Activated B cell treated with CpG ODN at 0.5 μM for 24 hours (primary cell): ENCODE measurements at regions of chr4 and their contacts with region 1.

Region 1: GRCh38 chr4:77156533-77156911 is 485 bp upstream of the CCNG2 start:
- DNase-seq: no peak
- ATAC-seq: peak; percentile 84
- H3K4me3 Mint-ChIP-seq: peak overlapping the region; percentile 99
- H3K27ac Mint-ChIP-seq: peak overlapping the region; percentile 100
- H3K4me1 Mint-ChIP-seq: peaks cover 75% of the 10 kb centered on the region
- H3K27me3 Mint-ChIP-seq: no peaks in the 10 kb centered on the region
- CTCF ChIP-seq: no peak

Region 2: GRCh38 chr4:76949276-76950051 is 207.1 kb before region 1 on chr4 and contains the start of gene SEPTIN11:
- CTCF ChIA-PET with region 1: no interaction called
- POLR2A ChIA-PET with region 1: interaction called, 3 read pairs
- intact Hi-C with region 1: loop called (anchors 1 kb)
- DNase-seq: peak; percentile 77
- ATAC-seq: peak; percentile 76
- H3K4me3 Mint-ChIP-seq: peak within 1 kb of the TSS; percentile 90
- H3K27ac Mint-ChIP-seq: peak within 1 kb of the TSS; percentile 68
- H3K4me1 Mint-ChIP-seq: peaks cover 15% of the 10 kb centered on the region
- H3K27me3 Mint-ChIP-seq: no peaks in the 10 kb centered on the region
- CTCF ChIP-seq: no peak
- total RNA-seq, gene SEPTIN11: 22.3 and 22.4 TPM in 2 replicates

Region 3: DNA sequence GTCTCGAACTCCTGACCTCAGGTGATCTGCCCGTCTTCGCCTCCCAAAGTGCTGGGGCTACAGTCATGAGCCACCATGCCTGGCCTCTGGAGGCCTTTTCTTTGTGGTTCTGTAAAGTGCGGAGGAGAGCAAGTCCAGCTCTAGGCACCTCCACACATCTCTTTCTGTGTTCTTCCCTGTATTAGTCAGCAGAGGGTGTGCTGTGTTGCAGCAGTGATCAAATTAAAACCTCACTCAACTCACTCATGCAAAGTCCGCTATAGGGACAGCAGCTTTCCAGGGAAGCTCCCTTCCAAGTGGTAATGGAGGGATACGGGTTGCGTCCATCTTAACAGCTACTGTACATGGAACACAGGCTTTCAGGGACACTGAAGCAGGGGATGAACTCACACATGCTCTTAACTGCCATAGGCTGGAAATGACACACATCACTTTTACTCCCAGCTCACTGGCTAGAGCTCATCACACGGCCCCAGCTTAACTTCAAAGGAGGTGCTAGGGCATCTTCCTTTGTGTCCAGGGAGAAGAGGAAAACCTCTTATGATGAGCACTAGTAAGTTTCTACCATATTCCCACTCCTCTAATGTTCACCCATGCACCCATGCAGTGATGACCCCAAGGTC is 35.5 kb before region 1 on chr4:
- CTCF ChIA-PET with region 1: interaction called, 14 read pairs
- POLR2A ChIA-PET with region 1: interaction called, 132 read pairs
- intact Hi-C with region 1: loop called (anchors 1 kb)
- DNase-seq: no peak
- ATAC-seq: peak; percentile 80
- H3K4me3 Mint-ChIP-seq: peak overlapping the region; percentile 5
- H3K27ac Mint-ChIP-seq: no peak overlapping the region
- H3K4me1 Mint-ChIP-seq: peaks cover 58% of the 10 kb centered on the region
- H3K27me3 Mint-ChIP-seq: no peaks in the 10 kb centered on the region
- CTCF ChIP-seq: no peak

Region 4: GRCh38 chr4:77146186-77147078 is 10.1 kb before region 1 on chr4:
- CTCF ChIA-PET with region 1: interaction called, 4 read pairs
- POLR2A ChIA-PET with region 1: interaction called, 14 read pairs
- intact Hi-C with region 1: loop called (anchors 1 kb)
- DNase-seq: no peak
- ATAC-seq: peak; percentile 49
- H3K4me3 Mint-ChIP-seq: peak overlapping the region; percentile 53
- H3K27ac Mint-ChIP-seq: peak overlapping the region; percentile 76
- H3K4me1 Mint-ChIP-seq: peaks cover 27% of the 10 kb centered on the region
- H3K27me3 Mint-ChIP-seq: no peaks in the 10 kb centered on the region
- CTCF ChIP-seq: no peak

Region 5: DNA sequence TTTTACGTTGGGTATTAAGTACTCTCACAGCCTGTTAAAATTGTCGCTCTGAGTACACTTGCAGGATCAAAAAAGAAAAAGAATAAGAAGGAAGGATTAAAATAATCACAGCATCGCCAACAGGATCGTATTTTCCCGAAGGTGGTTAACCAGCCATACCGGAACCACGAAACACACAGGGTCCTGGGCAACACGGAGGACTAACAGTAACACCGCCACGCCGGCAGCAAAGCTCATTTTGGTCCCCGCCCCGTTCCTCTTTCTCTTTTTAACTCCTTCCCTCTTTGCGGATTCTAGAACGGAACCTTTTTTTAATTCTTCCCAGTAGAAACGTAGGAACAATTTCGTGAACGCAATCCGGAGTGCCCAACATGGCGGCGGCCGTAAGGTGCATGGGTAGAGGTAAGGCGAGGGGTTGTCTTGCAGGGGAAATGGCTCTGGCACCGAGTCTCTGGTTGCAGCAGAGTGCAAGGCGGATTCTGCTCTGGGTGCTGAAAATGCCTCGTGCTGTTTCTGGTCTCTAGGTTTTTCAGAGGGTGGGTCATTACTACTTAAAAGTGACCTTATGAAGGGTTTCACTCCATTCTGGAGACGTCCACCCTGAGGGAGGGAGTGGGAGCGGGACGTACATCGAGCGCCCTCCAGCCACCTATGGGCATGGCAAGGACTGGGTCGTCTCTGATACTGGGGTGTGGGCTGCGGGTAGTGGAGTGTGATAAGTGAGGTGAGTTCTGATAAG is 706.1 kb after region 1 on chr4 and contains the start of gene MRPL1:
- CTCF ChIA-PET with region 1: no interaction called
- POLR2A ChIA-PET with region 1: interaction called, 8 read pairs
- intact Hi-C with region 1: loop called (anchors 5 kb)
- DNase-seq: peak; percentile 72
- ATAC-seq: peak; percentile 86
- H3K4me3 Mint-ChIP-seq: peak within 1 kb of the TSS; percentile 97
- H3K27ac Mint-ChIP-seq: peak within 1 kb of the TSS; percentile 100
- H3K4me1 Mint-ChIP-seq: peaks cover 47% of the 10 kb centered on the region
- H3K27me3 Mint-ChIP-seq: no peaks in the 10 kb centered on the region
- CTCF ChIP-seq: no peak
- total RNA-seq, gene MRPL1: 31.7 and 38.3 TPM in 2 replicates